Naive thymus-derived CD4-positive, alpha-beta T cell (primary cell): ENCODE measurements at regions of chr2 and their contacts with region 1.

Region 1: GRCh38 chr2:152694161-152694661 is 23.1 kb downstream of the PRPF40A start:
- DNase-seq: peak in 5 of 9 donors; percentile 13 to 30 (median 21)
- ATAC-seq: peak; percentile 84
- H3K4me3 ChIP-seq: peak overlapping the region; percentile 34
- H3K4me3 Mint-ChIP-seq: peak overlapping the region; percentile 58 to 87 (median 82)
- H3K27ac ChIP-seq: peak overlapping the region; percentile 61
- H3K27ac Mint-ChIP-seq: peak overlapping the region; percentile 76 to 98 (median 88)
- H3K4me1 ChIP-seq: peaks cover 5 to 7% of the 10 kb centered on the region in 2 donors
- H3K4me1 Mint-ChIP-seq: peaks cover 14 to 52% (median 37%) of the 10 kb centered on the region in 7 donors
- H3K27me3 ChIP-seq: no peaks in the 10 kb centered on the region
- H3K27me3 Mint-ChIP-seq: no peaks in the 10 kb centered on the region

Region 2: DNA sequence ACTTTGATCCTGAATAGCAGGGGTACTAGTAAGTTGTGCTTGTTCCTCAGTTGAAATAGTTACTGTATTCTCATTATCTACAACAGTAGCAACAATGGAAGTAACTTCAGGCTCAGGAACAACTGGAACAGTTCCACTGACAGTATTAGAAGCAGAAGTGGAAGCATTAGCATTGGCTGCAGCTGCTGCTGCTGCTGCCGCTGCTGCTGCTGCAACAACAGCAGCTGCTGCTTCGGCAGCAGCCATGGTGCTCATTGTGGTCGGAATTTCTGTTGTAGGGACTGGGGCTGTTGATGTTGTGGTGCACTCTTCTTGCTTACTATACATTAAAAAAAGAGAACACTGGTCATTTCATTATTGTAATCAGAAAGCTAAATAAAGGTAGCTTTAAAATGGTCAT is 17.8 kb before region 1 on chr2:
- CTCF ChIA-PET with region 1: interaction called, 3 read pairs
- POLR2A ChIA-PET with region 1: no interaction called
- intact Hi-C with region 1: loop called in 1 of 2 experiments (anchors 2 kb)
- DNase-seq: no peak
- ATAC-seq: no peak
- H3K4me3 ChIP-seq: no peak overlapping the region
- H3K4me3 Mint-ChIP-seq: no peak overlapping the region
- H3K27ac ChIP-seq: no peak overlapping the region
- H3K27ac Mint-ChIP-seq: no peak overlapping the region
- H3K4me1 ChIP-seq: no peaks in the 10 kb centered on the region
- H3K4me1 Mint-ChIP-seq: peaks cover 0 to 5% (median under 1%) of the 10 kb centered on the region in 7 donors
- H3K27me3 ChIP-seq: no peaks in the 10 kb centered on the region
- H3K27me3 Mint-ChIP-seq: no peaks in the 10 kb centered on the region